ENCODE measurements at regions of chr14 and their contacts with region 1.

Region 1: DNA sequence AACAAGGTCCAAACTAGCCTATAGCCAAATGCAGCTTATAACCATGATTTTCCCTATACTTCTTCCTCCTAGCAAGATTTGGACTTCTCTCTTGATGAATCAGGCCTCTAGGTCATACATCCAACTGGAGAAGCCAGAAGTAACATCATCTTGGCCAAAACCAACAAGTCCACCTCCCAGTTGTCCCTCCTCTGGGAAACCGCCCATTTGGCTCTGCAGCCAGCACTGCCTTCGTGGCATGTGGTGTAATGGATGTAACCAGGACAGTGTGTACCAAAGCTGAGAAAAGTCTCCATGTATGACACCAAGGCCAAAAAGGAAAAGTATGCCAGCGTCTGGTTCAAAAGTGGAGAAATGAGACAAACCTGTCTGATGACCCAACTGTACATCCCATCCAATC is 59.3 kb upstream of the VASH1 start:
- DNase-seq: peak; percentile 94

Region 2: GRCh38 chr14:76426161-76426696 is 275.8 kb before region 1 on chr14:
- intact Hi-C with region 1: no loop called
- DNase-seq: no peak

Region 3: GRCh38 chr14:76776666-76777251 is 74.8 kb after region 1 on chr14:
- intact Hi-C with region 1: loop called in 1 of 2 experiments (anchors 2 kb)
- DNase-seq: peak; percentile 58